ENCODE measurements at regions of chr4 and their contacts with region 1.

Region 1: DNA sequence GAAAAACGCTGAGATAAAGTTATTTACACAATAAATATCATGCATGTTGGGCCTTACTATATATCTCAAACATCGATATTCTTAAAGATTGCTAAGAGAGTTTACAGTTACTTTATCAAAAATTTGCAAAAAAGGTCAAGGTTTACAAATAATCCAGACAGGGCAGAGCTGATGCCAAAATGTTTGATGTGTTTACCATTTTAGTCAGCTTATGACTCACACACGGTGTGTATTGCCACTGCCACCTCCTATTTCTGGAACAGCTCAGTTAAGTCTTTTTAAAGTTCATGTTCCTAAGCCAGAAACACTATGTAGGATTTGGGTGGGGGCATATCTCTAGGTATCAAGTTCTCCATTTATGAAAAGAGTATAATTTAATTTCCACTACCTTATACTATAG is 580.6 kb downstream of the INPP4B start:
- DNase-seq: no peak
- H3K4me3 Mint-ChIP-seq: no peak overlapping the region
- H3K27ac Mint-ChIP-seq: peak overlapping the region; percentile 69
- H3K4me1 Mint-ChIP-seq: peaks cover 70% of the 10 kb centered on the region
- H3K27me3 Mint-ChIP-seq: no peaks in the 10 kb centered on the region

Region 2: GRCh38 chr4:142126890-142127497 is 138.5 kb before region 1 on chr4:
- intact Hi-C with region 1: loop called (anchors 5 kb)
- DNase-seq: peak; percentile 24
- H3K4me3 Mint-ChIP-seq: no peak overlapping the region
- H3K27ac Mint-ChIP-seq: no peak overlapping the region
- H3K4me1 Mint-ChIP-seq: peaks cover 20% of the 10 kb centered on the region
- H3K27me3 Mint-ChIP-seq: no peaks in the 10 kb centered on the region

Region 3: DNA sequence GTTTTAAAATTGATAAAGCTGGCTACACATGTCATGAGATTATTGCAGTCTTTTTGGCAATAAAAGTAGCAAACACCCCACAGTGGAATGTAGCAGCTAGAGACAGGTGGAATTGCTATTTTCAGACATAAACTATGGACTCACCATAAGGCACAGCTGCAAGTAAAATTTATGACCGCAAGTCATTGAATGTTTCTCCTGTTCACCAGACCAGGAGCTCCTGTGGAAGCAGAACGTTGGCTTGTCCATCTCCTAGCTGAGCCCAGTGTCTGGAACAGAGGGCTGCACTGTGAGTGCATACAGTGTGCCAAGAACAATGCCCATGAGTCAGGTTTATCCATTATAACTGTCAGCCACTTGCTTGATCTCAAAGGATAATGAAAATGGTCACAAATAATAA is 42.3 kb after region 1 on chr4:
- intact Hi-C with region 1: loop called (anchors 5 kb)
- DNase-seq: no peak
- H3K4me3 Mint-ChIP-seq: no peak overlapping the region
- H3K27ac Mint-ChIP-seq: no peak overlapping the region
- H3K4me1 Mint-ChIP-seq: peaks cover 18% of the 10 kb centered on the region
- H3K27me3 Mint-ChIP-seq: no peaks in the 10 kb centered on the region

Region 4: DNA sequence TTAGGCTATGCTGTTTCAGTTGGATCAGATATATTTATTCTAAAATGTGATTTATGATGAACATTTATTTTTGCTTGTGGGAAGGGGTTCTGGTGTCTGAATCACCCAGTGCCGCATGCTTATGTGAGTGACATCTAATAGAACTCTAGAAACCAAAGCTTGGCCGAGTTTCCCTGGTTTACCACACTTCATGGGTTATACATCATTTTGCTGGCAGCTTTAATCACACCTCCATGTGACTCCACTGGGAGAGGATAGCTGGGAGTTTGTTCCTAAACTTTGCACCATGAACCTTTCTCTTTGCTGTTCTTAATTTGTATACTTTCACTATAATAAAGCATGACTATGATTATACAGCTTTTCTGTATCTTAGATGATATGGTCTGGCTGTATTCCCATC is 197.7 kb after region 1 on chr4:
- intact Hi-C with region 1: no loop called
- DNase-seq: no peak
- H3K4me3 Mint-ChIP-seq: no peak overlapping the region
- H3K27ac Mint-ChIP-seq: no peak overlapping the region
- H3K4me1 Mint-ChIP-seq: peaks cover 4% of the 10 kb centered on the region
- H3K27me3 Mint-ChIP-seq: no peaks in the 10 kb centered on the region

Region 5: GRCh38 chr4:143025081-143025704 is 759.7 kb after region 1 on chr4:
- intact Hi-C with region 1: loop called (anchors 10 kb)
- DNase-seq: no peak
- H3K4me3 Mint-ChIP-seq: no peak overlapping the region
- H3K27ac Mint-ChIP-seq: no peak overlapping the region
- H3K4me1 Mint-ChIP-seq: peaks cover 18% of the 10 kb centered on the region
- H3K27me3 Mint-ChIP-seq: no peaks in the 10 kb centered on the region

Measured in activated T-helper 2 cell treated with anti-CD3 and anti-CD28 coated beads, Interferon-gamma antibody, Interleukin-2, Interleukin-4, amounts not matched to agents 10 μg/mL and 5 μg/mL and 100 μg/mL, durations not matched to agents 14 hours and 24 hours and 36 hours (primary cell).